Astrocyte of the cerebellum (primary cell): ENCODE measurements at regions of chr10 and their contacts with region 1.

Region 1: DNA sequence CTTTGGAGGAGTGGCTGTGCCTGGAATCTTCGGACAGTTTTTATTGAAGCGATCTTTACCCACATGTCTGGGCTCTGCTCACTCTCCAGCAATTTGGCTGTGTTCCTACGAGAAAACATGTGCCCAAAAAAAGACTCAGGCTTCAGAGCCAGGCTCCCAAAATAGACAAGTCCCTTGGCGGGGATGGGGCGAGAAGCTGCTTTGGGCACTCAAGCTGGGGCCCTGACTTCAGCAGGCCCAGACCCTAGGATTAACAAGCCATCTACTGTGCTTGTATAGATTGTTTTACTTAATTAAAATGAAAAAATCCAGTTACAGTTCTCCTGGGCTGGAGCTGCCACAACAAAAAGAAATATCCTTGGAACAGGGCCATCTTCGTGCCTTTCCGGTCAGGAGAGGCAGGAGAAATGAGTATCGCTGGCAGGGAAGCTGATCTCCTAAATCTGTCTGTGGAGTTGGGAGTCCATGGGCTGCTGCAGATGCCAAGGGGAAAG is 51.4 kb upstream of the PDCD4 start:
- DNase-seq: no peak
- H3K4me3 ChIP-seq: no peak overlapping the region
- CTCF ChIP-seq: no peak

Region 2: DNA sequence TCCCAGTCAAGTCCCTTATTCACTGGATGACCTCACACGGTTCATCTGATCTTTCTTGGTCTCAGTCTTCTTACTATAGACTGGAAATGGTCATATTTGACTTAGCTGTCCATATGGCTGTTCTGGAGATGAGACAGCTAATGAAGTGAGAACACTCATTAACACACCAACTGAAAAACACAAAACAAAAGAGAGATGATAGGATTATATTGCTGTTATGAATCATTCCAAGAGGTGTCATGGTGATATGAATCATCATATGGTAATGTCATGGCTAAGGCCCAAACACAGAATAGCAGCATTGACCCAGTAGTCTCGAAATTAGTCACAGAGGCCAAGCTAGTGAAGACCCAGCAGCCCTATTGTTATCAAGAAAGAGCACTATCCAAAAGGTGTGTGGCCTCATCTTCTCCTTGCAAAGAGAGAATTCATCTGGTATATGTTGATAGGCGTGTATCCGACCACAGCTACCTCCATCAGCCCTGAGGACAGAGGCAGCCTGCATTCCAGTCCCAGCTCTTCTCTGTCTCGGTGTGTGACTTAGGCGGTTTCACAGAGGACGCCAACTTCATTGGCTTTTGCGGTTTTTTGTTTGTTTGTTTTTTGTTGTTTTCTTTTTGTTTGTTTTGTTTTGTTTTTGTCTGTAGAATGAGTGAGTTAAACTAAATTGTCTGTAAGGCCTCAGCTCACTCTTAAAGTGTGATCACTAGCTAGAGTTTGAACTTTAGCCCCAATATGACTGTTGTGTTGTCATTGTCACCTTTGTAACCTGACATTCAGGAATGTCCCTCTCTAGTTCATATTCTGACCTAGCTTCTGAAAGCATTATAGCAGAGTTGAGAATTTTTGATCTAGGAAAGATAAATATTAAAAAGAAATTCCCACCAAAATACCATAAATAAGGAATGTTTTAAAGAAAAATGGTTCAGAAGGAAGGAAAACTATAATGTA is 46.0 kb before region 1 on chr10:
- in situ Hi-C with region 1: no loop called
- DNase-seq: peak; percentile 39
- H3K4me3 ChIP-seq: no peak overlapping the region
- CTCF ChIP-seq: no peak

Region 3: GRCh38 chr10:110786172-110786571 is 34.2 kb before region 1 on chr10:
- in situ Hi-C with region 1: loop called (anchors 5 kb)
- DNase-seq: no peak
- H3K4me3 ChIP-seq: no peak overlapping the region
- CTCF ChIP-seq: no peak

Region 4: DNA sequence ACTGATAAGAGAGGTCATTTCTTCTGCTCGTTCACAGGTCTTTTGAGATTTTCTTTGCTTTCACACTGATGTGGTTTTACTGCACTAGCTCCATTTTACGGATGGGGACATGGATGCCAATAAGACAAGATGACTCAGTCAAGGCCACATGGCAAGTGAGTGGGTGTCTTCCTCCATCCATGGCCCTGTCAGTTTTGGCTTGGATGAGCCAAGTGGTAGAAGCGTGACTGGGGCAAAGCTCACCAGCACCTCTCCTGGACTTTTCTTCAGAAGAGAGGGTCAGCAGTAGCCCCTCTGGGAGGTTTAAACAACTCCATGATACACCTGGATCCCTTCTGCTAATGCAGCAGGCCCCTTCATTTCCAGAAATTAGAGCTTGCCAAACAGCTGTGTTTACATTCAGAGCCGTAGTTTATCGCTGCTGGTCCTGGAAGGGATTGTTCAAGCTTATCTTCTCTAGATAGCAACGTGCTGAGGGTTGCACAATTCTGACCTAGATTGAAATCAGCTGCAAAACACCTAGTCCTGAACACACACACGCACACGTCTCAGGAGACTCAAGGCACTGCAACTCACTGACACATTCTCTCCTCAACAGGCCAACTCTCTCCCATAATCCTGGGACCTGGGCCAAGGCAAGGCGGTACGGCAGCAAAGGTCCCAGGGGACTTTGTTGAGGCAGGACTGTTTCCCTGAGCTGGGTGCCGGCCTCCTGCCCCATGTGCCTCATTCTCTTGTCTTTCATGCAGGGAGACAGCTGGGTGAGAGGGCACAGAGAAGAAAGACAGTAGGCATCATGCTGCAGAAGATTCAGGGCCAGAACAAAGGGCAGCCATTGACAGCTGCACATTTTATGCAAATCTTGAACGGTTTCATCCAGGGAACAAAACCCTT is 37.1 kb after region 1 on chr10:
- in situ Hi-C with region 1: loop called (anchors 5 kb)
- DNase-seq: no peak
- H3K4me3 ChIP-seq: no peak overlapping the region
- CTCF ChIP-seq: no peak

Region 5: GRCh38 chr10:111203615-111204014 is 383.2 kb after region 1 on chr10:
- in situ Hi-C with region 1: no loop called
- DNase-seq: no peak
- H3K4me3 ChIP-seq: no peak overlapping the region
- CTCF ChIP-seq: no peak